Heart right ventricle (tissue), 16 donors: ENCODE measurements at regions of chr18 and their contacts with region 1.

Region 1: GRCh38 chr18:31555971-31556747 is 35.5 kb upstream of the TTR start:
- DNase-seq: peak in 1 of 2 donors; percentile 29
- ATAC-seq: peak in 3 of 8 donors; percentile 28 to 70 (median 63)
- H3K4me3 ChIP-seq: no peak overlapping the region
- H3K27ac ChIP-seq: no peak overlapping the region
- H3K4me1 ChIP-seq: no peaks in the 10 kb centered on the region
- H3K27me3 ChIP-seq: peaks cover 0 to 17% (median 0%) of the 10 kb centered on the region in 7 donors
- CTCF ChIP-seq: peak; percentile 71 to 92 (median 82)

Region 2: GRCh38 chr18:30999186-30999585 is 557.0 kb before region 1 on chr18:
- intact Hi-C with region 1: loop called in 1 of 10 experiments (anchors 10 kb)
- DNase-seq: no peak
- ATAC-seq: no peak
- H3K4me3 ChIP-seq: no peak overlapping the region
- H3K27ac ChIP-seq: no peak overlapping the region
- H3K4me1 ChIP-seq: no peaks in the 10 kb centered on the region
- H3K27me3 ChIP-seq: peaks cover 0 to 11% (median 0%) of the 10 kb centered on the region in 7 donors
- CTCF ChIP-seq: peak in 6 of 9 donors; percentile 2 to 45 (median 30)

Region 3: GRCh38 chr18:31626409-31626808 is 70.2 kb after region 1 on chr18:
- intact Hi-C with region 1: loop called in 1 of 10 experiments (anchors 10 kb)
- DNase-seq: no peak
- ATAC-seq: peak in 1 of 8 donors; percentile 37
- H3K4me3 ChIP-seq: no peak overlapping the region
- H3K27ac ChIP-seq: no peak overlapping the region
- H3K4me1 ChIP-seq: no peaks in the 10 kb centered on the region
- H3K27me3 ChIP-seq: no peaks in the 10 kb centered on the region
- CTCF ChIP-seq: peak in 4 of 9 donors; percentile 19 to 21 (median 20)

Region 4: DNA sequence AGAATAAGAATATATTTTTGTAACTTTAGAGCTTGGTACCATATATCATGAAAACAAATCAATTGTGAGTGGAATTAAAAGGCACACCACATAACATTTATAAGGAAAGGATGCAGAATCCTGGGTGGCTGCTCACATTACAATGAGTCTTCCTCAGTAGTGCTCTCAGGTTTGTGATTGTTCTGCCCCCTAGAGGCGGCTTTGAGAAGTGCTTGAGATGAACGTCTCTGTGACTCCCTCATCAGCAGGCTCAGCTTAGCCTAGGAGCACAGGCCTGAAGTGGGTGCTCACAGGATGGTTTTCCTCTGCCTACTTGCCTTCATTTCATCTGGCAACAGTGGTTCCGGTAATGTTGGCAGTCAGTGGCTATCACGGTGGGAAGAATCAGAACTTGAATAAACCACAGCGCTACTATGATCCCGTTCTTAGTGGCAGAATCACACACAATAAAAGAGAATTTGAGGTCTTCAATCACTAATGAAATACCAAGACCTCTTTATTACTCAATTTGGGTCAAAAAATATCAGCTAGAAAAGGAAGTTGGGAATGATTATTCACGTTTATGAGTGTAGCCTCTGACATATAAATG is 166.3 kb after region 1 on chr18:
- intact Hi-C with region 1: loop called in 9 of 10 experiments (anchors 1 to 5 kb)
- DNase-seq: peak; percentile 50 to 81
- ATAC-seq: peak; percentile 79 to 88 (median 85)
- H3K4me3 ChIP-seq: no peak overlapping the region
- H3K27ac ChIP-seq: no peak overlapping the region
- H3K4me1 ChIP-seq: peaks cover 0 to 26% (median 12%) of the 10 kb centered on the region in 9 donors
- H3K27me3 ChIP-seq: peaks cover 0 to 38% (median 0%) of the 10 kb centered on the region in 7 donors
- CTCF ChIP-seq: peak; percentile 46 to 95 (median 89)

Region 5: DNA sequence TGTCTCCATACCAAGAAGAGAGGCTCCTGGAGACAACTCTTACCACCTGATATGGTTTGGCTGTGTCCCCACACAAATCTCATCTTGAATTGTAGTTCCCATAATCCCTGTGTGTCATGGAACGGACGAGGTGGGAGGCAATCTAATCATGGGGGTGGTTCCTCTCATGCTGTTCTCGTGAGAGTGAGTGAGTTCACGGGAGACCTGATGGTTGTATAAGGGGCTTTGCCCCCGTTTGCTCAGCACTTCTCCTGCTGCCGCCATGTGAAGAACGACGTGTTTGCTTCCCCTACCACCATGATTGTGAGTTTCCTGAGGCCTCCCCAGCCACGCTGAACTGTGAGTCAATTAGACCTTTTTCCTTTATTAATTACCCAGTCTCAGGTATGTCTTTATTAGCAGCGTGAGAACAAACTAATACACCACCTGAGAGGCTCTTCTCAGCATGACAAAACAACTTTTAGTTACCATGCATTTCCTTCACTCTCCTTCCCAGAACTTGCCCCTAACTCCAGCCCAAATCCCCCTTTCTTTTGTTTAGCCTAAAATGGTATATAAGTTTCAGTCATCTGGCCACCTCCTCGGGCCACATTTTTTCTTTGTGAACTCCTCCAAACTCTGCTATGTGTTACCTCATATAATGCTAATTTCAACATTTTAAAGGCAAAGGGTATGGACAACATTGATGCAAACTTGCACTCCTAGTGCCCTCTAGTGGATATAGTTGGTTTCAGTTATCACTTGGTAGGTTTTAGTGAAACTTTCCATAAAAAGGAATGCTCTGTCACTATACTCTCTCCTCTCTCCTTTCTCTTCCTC is 263.2 kb after region 1 on chr18:
- intact Hi-C with region 1: loop called (anchors 1 to 10 kb)
- DNase-seq: no peak
- ATAC-seq: peak in 3 of 8 donors; percentile 44 to 69 (median 46)
- H3K4me3 ChIP-seq: no peak overlapping the region
- H3K27ac ChIP-seq: no peak overlapping the region
- H3K4me1 ChIP-seq: peaks cover 0 to 9% (median 0%) of the 10 kb centered on the region in 9 donors
- H3K27me3 ChIP-seq: no peaks in the 10 kb centered on the region
- CTCF ChIP-seq: peak; percentile 34 to 78 (median 73)

Region 6: DNA sequence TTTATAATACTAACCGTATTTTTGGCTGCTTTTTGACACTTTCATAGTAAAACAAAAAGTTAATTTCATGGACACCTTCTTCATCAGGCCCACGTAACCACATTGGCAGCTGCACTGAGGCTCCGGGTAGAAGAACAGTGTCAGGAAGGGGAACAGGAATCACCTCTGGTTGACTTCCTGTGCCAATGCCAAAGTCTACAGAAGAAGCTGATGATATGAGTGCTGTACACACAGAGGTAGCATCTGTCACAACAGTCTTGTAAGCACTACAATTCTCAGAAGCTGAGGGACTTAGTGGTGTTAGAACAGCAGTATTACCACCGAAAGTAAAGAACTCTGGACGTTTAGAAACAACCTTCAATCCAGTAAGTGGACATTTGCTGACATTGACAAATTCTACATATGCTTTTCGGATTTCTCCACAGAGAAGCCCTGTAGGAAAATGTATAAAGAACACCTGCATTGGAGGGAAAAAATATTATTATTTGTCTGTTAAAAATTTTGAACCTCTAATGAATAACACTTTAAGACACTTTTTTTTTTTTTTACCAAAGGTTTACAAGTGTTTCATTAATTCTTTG is 301.5 kb after region 1 on chr18:
- intact Hi-C with region 1: no loop called
- DNase-seq: no peak
- ATAC-seq: no peak
- H3K4me3 ChIP-seq: no peak overlapping the region
- H3K27ac ChIP-seq: no peak overlapping the region
- H3K4me1 ChIP-seq: peaks cover 0 to 4% (median 0%) of the 10 kb centered on the region in 9 donors
- H3K27me3 ChIP-seq: no peaks in the 10 kb centered on the region
- CTCF ChIP-seq: no peak

Region 7: DNA sequence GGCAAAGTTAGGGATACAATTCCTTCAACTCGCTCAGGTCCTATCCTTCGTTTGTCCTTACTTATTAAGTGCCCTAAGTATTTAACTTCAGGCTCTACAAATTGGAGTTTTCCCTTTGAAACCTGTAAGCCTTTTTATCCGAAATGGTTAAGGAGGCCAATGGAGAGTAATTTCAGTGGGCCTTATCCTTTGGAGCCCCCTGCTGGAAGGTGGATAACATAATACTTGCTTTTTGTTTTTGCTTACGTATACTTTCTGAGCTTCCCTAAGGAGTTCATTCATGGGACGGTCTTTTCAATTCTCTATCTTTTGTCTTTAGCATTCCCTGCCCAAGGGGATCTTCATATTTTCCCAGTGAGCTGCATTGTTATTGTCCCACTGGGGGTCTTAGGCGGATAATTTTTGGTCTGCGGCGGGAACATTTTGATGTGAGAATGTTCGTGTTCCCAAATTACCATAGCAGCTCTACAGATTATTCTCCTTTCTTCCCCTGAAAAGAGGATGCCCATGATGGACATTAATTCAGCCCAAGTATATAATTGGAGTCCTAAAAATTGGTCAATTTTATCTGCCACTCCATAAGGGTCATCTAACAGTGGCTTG is 421.2 kb after region 1 on chr18:
- intact Hi-C with region 1: loop called in 7 of 10 experiments (anchors 5 to 10 kb)
- DNase-seq: peak in 1 of 2 donors; percentile 58
- ATAC-seq: peak in 5 of 8 donors; percentile 44 to 73 (median 59)
- H3K4me3 ChIP-seq: no peak overlapping the region
- H3K27ac ChIP-seq: no peak overlapping the region
- H3K4me1 ChIP-seq: peaks cover 0 to 5% (median 0%) of the 10 kb centered on the region in 9 donors
- H3K27me3 ChIP-seq: no peaks in the 10 kb centered on the region
- CTCF ChIP-seq: peak; percentile 63 to 81 (median 69)

Region 8: DNA sequence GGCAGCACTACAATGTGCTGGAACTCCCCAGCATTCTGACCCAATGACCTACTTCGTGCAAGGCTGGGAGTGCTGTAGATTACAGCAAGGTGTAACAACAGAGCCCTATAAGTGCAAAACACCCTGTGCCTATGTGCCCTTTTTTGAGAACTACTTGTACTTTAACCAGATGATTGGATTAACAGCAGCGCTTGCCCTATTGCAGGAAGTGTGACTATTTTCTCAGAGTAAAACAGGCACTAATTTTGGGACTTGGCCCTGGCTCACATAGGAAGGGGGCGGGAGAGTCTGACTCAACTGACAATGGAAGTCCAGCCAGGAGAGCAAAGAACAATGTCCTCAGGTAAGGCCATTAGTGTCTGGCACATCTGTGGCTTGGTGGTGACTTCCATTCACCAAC is 426.9 kb after region 1 on chr18:
- intact Hi-C with region 1: loop called in 7 of 10 experiments (anchors 5 to 10 kb)
- DNase-seq: peak in 1 of 2 donors; percentile 11
- ATAC-seq: peak; percentile 67 to 95 (median 88)
- H3K4me3 ChIP-seq: no peak overlapping the region
- H3K27ac ChIP-seq: peak overlapping the region in 8 of 10 donors; percentile 12 to 73 (median 54)
- H3K4me1 ChIP-seq: peaks cover 0 to 30% (median 14%) of the 10 kb centered on the region in 9 donors
- H3K27me3 ChIP-seq: no peaks in the 10 kb centered on the region
- CTCF ChIP-seq: no peak